Mammary epithelial cell (primary cell): ENCODE measurements at regions of chr12 and their contacts with region 1.

Region 1: DNA sequence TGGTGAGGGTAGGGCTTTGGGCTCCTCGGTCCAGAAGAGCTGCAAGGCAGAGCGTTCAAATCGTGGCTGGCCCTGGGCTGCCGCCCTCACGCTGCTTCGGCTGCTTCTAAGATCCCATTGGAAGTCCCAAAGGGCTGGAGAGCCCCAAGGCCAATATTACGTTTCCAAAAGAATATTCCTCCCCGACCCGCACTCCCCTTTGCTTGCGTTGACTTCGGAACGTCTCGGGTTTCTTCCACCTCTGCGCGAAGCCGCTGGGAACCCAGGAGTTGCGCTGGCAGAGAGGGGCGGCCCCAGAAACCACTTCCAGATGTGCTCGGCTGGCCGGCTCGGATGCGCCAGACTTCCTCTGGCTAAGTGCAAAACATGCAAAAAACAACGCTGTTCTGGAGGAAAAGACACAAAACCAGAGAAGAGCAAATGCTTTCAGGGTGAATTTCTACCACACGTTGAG is at the start of gene GLT8D2:
- DNase-seq: peak; percentile 57
- H3K4me3 ChIP-seq: peak within 1 kb of the TSS; percentile 48 to 60 (median 53)
- H3K27ac ChIP-seq: peak within 1 kb of the TSS; percentile 47
- H3K4me1 ChIP-seq: peaks cover 22% of the 10 kb centered on the region
- H3K27me3 ChIP-seq: no peaks in the 10 kb centered on the region
- CTCF ChIP-seq: no peak
- total RNA-seq, gene GLT8D2: 20.0 to 20.1 TPM

Region 2: DNA sequence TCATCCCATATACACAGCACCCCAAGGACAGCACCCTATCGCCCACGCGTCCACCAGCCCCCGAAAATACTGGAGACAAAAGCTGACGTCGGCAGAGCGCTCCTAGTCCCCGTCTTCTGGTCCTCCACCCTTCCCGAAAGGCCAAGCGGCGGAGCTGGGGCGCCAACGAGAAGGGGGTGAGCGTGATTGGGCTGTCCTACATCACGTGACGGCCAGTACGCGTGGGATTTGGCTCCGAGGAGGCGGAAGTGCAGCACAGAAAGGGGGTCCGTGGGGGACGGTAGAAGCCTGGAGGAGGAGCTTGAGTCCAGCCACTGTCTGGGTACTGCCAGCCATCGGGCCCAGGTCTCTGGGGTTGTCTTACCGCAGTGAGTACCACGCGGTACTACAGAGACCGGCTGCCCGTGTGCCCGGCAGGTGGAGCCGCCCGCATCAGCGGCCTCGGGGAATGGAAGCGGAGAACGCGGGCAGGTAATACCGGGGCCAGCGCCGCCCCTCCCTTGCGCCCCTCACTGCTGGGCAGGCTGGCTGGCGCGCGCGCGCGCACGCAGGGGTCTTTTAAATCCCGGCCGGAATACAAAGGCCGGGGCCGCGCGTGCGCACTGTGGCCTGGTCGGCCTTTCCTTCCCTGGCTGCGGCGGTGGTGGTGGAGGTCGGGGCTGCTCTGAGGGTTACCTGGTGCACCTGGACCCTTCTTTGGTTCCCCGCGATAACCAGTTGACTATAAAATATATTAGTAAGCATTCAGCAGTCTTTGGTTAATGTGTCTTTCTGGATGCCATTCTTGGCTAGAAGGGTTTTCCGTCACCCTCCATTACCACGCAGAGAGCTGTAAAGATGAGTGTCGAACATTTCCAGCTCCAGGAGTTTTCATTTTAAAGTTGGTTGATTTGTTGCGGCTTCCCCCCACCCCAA is 84.1 kb before region 1 on chr12 and contains the start of gene TDG:
- CTCF ChIA-PET with region 1: interaction called, 3 read pairs
- dilution Hi-C with region 1: no loop called
- in situ Hi-C with region 1: no loop called
- intact Hi-C with region 1: loop called (anchors 5 kb)
- DNase-seq: peak; percentile 98
- H3K4me3 ChIP-seq: peak within 1 kb of the TSS; percentile 82 to 91 (median 89)
- H3K27ac ChIP-seq: peak within 1 kb of the TSS; percentile 88
- H3K4me1 ChIP-seq: peaks cover 12% of the 10 kb centered on the region
- H3K27me3 ChIP-seq: no peaks in the 10 kb centered on the region
- CTCF ChIP-seq: peak in 1 of 2 donors; percentile 37
- total RNA-seq, gene TDG: 27.3 to 42.0 TPM